Prostate gland (tissue), 2 donors: ENCODE measurements at regions of chr3 and their contacts with region 1.

Region 1: GRCh38 chr3:169348929-169349613 is 314.4 kb downstream of the MECOM start:
- DNase-seq: no peak
- H3K4me3 ChIP-seq: no peak overlapping the region
- H3K27ac ChIP-seq: no peak overlapping the region
- H3K4me1 ChIP-seq: no peaks in the 10 kb centered on the region
- H3K27me3 ChIP-seq: no peaks in the 10 kb centered on the region
- CTCF ChIP-seq: no peak
- POLR2A ChIP-seq: no peak

Region 2: GRCh38 chr3:168417016-168417415 is 932.1 kb before region 1 on chr3:
- intact Hi-C with region 1: no loop called
- DNase-seq: no peak
- H3K4me3 ChIP-seq: no peak overlapping the region
- H3K27ac ChIP-seq: no peak overlapping the region
- H3K4me1 ChIP-seq: no peaks in the 10 kb centered on the region
- H3K27me3 ChIP-seq: no peaks in the 10 kb centered on the region
- CTCF ChIP-seq: no peak
- POLR2A ChIP-seq: no peak

Region 3: DNA sequence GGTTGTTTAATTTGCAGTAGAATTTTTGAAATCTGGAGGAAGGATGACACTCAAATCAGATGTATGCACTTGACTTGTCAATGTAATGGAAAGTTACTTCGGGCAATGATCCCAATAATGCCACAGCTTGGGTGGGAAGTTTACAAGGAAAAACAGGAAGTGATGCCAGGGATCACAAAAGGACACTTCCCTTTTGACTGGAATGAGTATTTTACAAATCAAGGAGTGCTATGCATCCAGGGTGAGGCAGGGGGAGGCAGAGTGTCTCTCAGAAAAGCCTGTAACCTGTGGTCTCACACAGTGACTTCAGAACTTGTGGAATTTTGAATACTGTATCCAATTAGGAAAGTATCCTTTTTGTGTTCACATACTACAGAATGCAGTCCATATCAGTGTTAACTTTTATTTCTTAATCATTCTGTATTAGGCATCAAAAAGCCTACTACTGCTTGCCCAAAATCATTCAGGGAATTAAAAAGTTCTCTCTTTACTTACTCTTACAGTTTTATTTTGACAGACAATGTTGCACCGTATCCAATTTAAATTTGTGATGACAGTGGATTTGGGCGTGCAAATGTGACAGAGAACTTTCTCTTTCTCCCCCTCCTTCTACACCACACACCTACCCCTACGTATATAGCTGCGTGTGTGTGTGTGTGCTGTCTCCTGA is 130.6 kb before region 1 on chr3:
- intact Hi-C with region 1: loop called (anchors 5 kb)
- DNase-seq: peak; percentile 8
- H3K4me3 ChIP-seq: no peak overlapping the region
- H3K27ac ChIP-seq: no peak overlapping the region
- H3K4me1 ChIP-seq: no peaks in the 10 kb centered on the region
- H3K27me3 ChIP-seq: no peaks in the 10 kb centered on the region
- CTCF ChIP-seq: peak in 3 of 4 experiments; percentile 23 to 63 (median 57)
- POLR2A ChIP-seq: no peak